AG04449 (cell line): ENCODE measurements at regions of chr15 and their contacts with region 1.

Region 1: GRCh38 chr15:42056934-42057779 is 36.3 kb upstream of the PLA2G4E start:
- DNase-seq: no peak
- H3K4me3 ChIP-seq: peak overlapping the region; percentile 38
- CTCF ChIP-seq: peak; percentile 59

Region 2: DNA sequence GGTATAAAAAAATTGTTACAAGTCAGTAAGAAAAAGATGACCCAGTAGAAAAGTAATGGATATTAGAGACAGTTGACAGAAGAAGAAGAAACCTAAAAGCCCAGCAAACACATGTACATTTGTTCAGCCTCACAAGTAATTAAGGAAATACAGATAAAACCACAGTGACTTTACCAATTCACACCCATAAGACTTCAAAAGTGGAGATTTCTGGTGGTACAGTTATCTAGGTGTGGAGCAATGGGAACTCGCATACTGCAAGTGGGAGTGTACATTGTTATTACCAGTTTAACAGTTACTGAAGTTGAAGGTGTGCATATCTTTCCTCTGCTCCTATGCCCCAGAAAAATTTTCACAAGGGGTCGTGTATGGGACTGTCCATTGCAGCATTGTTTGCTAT is 301.0 kb before region 1 on chr15:
- CTCF ChIA-PET with region 1: no interaction called
- POLR2A ChIA-PET with region 1: no interaction called
- DNase-seq: no peak
- H3K4me3 ChIP-seq: no peak overlapping the region
- CTCF ChIP-seq: no peak

Region 3: GRCh38 chr15:42079401-42079908 is 22.3 kb after region 1 on chr15:
- CTCF ChIA-PET with region 1: interaction called, 19 read pairs
- POLR2A ChIA-PET with region 1: no interaction called
- DNase-seq: no peak
- H3K4me3 ChIP-seq: no peak overlapping the region
- CTCF ChIP-seq: no peak

Region 4: GRCh38 chr15:42688301-42688700 is 631.1 kb after region 1 on chr15:
- CTCF ChIA-PET with region 1: no interaction called
- POLR2A ChIA-PET with region 1: no interaction called
- DNase-seq: no peak
- H3K4me3 ChIP-seq: no peak overlapping the region
- CTCF ChIP-seq: no peak